ENCODE measurements at regions of chr3 and their contacts with region 1.

Region 1: GRCh38 chr3:17632401-17633100 is 109.9 kb downstream of the TBC1D5 start:
- DNase-seq: no peak
- ATAC-seq: no peak
- H3K4me3 ChIP-seq: no peak overlapping the region
- H3K27ac ChIP-seq: no peak overlapping the region
- H3K4me1 ChIP-seq: peaks cover 0 to 2% of the 10 kb centered on the region in 2 donors
- H3K27me3 ChIP-seq: no peaks in the 10 kb centered on the region

Region 2: GRCh38 chr3:17431004-17431403 is 201.5 kb before region 1 on chr3:
- intact Hi-C with region 1: loop called in 1 of 2 experiments (anchors 10 kb)
- DNase-seq: no peak
- ATAC-seq: no peak
- H3K4me3 ChIP-seq: no peak overlapping the region
- H3K27ac ChIP-seq: no peak overlapping the region
- H3K4me1 ChIP-seq: peaks cover 0 to 1% of the 10 kb centered on the region in 2 donors
- H3K27me3 ChIP-seq: no peaks in the 10 kb centered on the region

Region 3: GRCh38 chr3:17500618-17501017 is 131.9 kb before region 1 on chr3:
- intact Hi-C with region 1: loop called in 1 of 2 experiments (anchors 10 kb)
- DNase-seq: no peak
- ATAC-seq: no peak
- H3K4me3 ChIP-seq: no peak overlapping the region
- H3K27ac ChIP-seq: no peak overlapping the region
- H3K4me1 ChIP-seq: peaks cover 2% of the 10 kb centered on the region in 2 donors
- H3K27me3 ChIP-seq: no peaks in the 10 kb centered on the region

Region 4: GRCh38 chr3:17553080-17553479 is 79.5 kb before region 1 on chr3:
- intact Hi-C with region 1: loop called in 1 of 2 experiments (anchors 10 kb)
- DNase-seq: no peak
- ATAC-seq: no peak
- H3K4me3 ChIP-seq: no peak overlapping the region
- H3K27ac ChIP-seq: peak overlapping the region in 1 of 2 donors; percentile 28
- H3K4me1 ChIP-seq: no peaks in the 10 kb centered on the region
- H3K27me3 ChIP-seq: no peaks in the 10 kb centered on the region

Region 5: DNA sequence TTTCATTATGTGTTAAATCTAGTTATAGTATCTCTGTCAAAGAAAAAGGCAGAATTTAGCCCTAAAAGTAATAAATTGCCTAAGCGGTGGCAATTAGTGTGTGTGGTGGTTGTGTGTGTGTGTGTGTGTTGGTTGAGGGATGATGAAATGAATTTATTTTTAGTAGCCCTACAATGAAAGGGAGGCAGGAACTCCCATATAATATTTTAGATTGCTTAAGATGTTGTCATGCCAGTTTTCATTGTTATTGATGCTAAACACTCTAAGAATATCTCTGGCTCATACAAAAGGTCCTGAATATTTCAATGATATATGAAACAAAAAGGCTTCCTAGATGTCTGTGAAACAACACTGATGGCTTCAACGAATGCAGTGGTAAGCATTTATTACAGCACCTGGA is 250.4 kb after region 1 on chr3:
- intact Hi-C with region 1: no loop called
- DNase-seq: no peak
- ATAC-seq: no peak
- H3K4me3 ChIP-seq: no peak overlapping the region
- H3K27ac ChIP-seq: no peak overlapping the region
- H3K4me1 ChIP-seq: no peaks in the 10 kb centered on the region
- H3K27me3 ChIP-seq: peaks cover 0 to 2% of the 10 kb centered on the region in 2 donors

Measured in aorta (tissue), 5 donors.